MCF 10A (cell line): ENCODE measurements at regions of chr14 and their contacts with region 1.

Region 1: GRCh38 chr14:81737938-81738337 is 204.3 kb upstream of the SEL1L start:
- DNase-seq: no peak
- H3K4me3 Mint-ChIP-seq: no peak overlapping the region
- H3K27ac Mint-ChIP-seq: no peak overlapping the region
- H3K4me1 Mint-ChIP-seq: no peaks in the 10 kb centered on the region
- H3K27me3 Mint-ChIP-seq: no peaks in the 10 kb centered on the region
- CTCF ChIP-seq: no peak

Region 2: DNA sequence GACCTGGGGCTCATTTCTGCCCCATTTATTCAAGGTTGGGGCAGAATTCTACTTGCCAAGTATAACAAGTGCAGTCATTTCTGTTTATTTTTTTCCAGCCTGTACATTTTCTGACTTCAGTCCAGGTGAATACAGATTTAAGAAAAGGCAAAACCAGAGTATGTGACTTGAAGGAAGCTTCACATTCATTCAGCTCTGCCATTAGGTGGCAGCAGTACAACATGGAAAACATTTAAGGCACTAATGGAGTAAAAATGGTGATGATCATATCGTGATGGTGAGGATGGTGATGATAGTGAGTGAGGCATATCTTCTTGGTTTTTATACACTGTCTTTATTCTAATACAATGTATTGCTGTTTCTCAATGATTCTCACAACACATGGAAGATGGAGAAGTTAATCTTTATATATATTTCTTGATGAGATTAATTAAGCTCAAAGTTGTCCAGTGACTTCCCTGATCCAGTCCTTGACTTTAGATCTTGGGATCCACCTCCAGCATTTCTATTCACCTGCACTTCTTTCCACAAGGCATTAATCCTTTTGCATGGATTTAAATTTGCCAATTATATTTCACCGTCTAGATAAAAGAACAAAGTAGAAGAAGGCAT is 27.6 kb before region 1 on chr14:
- CTCF ChIA-PET with region 1: interaction called, 10 read pairs
- POLR2A ChIA-PET with region 1: no interaction called
- intact Hi-C with region 1: no loop called
- DNase-seq: peak; percentile 63
- H3K4me3 Mint-ChIP-seq: no peak overlapping the region
- H3K27ac Mint-ChIP-seq: no peak overlapping the region
- H3K4me1 Mint-ChIP-seq: no peaks in the 10 kb centered on the region
- H3K27me3 Mint-ChIP-seq: no peaks in the 10 kb centered on the region
- CTCF ChIP-seq: peak; percentile 72